ENCODE measurements at regions of chr3 and their contacts with region 1.

Region 1: DNA sequence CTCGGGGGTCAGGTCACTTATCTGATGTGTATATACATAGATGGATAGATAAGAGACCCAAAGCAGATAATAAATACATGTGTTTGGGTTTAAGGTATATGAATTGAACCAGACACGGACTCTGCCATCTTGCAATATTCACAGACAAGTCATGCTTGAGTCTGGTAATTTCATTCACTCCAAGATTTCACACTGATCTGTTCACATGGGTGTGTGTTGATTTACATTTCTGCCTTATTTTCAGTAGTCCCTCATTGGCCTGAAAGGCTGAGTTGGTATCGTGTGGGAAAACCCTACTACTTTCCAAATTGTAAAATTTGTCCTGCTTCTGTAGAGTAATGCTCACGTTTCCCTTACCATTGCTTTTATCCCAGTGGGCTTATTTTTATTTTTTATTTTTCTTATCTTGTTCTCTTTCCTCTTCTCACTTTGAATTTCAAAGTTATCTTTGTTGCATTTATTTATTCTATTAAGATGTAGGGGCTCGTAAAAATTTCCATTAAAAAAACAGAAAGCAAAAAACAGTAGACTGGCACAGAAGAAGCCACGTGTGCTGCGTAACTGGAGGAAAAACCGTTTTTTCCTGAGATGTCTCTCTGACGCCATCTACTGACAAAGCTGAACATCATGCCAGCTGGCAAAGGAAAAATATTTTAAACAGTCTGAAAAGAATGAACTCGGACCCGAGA is 10.8 kb upstream of the MFSD1 start:
- DNase-seq: no peak
- ATAC-seq: peak; percentile 70 to 80
- H3K4me3 ChIP-seq: peak overlapping the region; percentile 28
- H3K27ac ChIP-seq: no peak overlapping the region
- H3K4me1 ChIP-seq: peaks cover 4% of the 10 kb centered on the region
- H3K27me3 ChIP-seq: no peaks in the 10 kb centered on the region
- CTCF ChIP-seq: peak; percentile 83

Region 2: DNA sequence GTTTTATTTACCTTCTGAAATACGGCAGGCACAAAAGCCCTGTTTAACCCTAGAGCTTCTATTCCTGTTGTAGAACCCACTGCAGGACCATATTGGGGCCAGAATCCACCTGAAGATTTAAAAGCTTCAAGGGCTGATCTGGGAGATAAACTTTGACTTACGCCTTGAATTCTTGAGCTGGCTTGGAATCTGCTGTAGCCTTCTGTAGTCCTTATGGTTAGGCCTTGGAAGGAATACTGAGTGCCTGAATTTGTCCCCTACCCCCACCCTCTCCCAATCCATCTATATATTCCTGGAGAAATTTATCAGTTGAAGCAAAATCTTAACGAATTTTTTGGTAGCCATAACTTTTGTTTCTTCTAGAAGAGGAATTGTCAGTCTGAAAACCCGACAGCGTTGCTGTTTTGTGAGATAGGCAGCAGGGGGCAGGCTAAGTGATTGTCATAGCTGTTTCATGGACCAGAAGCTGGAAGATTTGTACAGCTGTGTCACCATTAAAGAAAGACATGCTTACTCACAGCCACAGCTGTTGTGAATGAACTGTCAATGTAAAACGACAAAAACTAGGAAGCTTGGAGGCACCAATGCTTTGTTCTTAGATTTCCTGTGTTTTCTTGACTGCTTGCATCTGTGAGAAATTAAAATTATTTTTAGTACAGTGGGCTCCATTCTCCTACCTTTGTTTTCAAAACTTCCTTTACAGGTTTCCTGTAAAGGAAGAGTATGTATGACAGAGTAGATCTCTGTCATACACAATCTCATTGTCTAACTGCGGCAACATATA is 131.4 kb before region 1 on chr3:
- intact Hi-C with region 1: loop called (anchors 10 kb)
- DNase-seq: no peak
- ATAC-seq: peak; percentile 70 to 82
- H3K4me3 ChIP-seq: no peak overlapping the region
- H3K27ac ChIP-seq: peak overlapping the region; percentile 27
- H3K4me1 ChIP-seq: peaks cover 9% of the 10 kb centered on the region
- H3K27me3 ChIP-seq: no peaks in the 10 kb centered on the region
- CTCF ChIP-seq: peak; percentile 65

Region 3: DNA sequence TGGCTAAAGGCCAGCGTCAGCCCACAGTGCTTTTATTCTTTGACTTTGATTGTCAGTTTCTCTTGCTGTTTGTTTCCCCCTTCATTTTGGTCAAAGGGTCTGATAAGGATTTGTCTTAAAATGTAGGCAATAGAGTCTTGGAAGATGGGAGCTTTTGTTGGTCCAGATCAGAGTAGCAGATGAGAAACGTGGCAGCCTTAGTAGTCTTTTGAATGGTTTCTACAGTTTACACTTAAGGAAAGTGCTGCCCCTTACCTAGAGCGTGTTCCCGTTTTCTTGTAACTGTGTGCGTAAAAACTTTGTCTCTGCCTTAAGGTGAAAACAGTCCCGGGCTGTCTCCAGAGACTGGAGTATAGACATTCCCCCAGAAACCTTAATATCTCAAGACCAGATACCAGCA is 119.2 kb before region 1 on chr3:
- intact Hi-C with region 1: no loop called
- DNase-seq: no peak
- ATAC-seq: peak in 1 of 2 donors; percentile 22
- H3K4me3 ChIP-seq: peak overlapping the region; percentile 68
- H3K27ac ChIP-seq: peak overlapping the region; percentile 81
- H3K4me1 ChIP-seq: peaks cover 24% of the 10 kb centered on the region
- H3K27me3 ChIP-seq: no peaks in the 10 kb centered on the region
- CTCF ChIP-seq: no peak

Region 4: GRCh38 chr3:158713094-158713499 is 77.9 kb before region 1 on chr3:
- intact Hi-C with region 1: no loop called
- DNase-seq: no peak
- ATAC-seq: peak; percentile 69 to 73
- H3K4me3 ChIP-seq: no peak overlapping the region
- H3K27ac ChIP-seq: peak overlapping the region; percentile 37
- H3K4me1 ChIP-seq: peaks cover 36% of the 10 kb centered on the region
- H3K27me3 ChIP-seq: no peaks in the 10 kb centered on the region
- CTCF ChIP-seq: no peak

Region 5: GRCh38 chr3:158727206-158728060 is 63.6 kb before region 1 on chr3:
- intact Hi-C with region 1: loop called (anchors 5 kb)
- DNase-seq: no peak
- ATAC-seq: peak; percentile 47 to 52
- H3K4me3 ChIP-seq: peak overlapping the region; percentile 26
- H3K27ac ChIP-seq: peak overlapping the region; percentile 38
- H3K4me1 ChIP-seq: peaks cover 60% of the 10 kb centered on the region
- H3K27me3 ChIP-seq: no peaks in the 10 kb centered on the region
- CTCF ChIP-seq: peak; percentile 90